ENCODE measurements at regions of chr12 and their contacts with region 1.

Region 1: DNA sequence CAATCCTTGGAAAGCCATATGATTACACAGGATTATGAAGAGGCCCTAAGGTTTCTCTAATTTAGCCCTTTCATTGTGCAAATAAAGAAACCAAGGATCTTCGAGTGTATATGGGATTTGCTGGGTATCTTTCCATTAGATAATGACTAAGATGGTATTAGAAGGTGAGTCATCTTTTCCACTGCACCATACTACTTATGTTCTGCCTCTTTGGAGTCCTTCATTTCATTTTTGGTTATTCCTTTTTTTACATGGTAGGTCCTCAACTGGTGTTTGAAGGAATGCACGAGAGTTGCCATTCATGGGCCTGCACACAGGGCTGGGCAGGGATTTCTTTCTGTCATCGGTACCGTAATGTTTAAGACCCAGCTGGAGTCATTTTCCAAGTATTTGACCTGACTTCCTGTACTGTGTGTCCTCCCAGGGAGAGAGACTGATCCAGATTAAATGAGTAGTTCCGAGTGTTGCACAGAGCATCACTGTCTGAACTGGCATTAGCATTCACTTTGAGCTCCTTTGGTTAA is 85.7 kb downstream of the BORCS5 start:
- DNase-seq: no peak
- H3K4me3 Mint-ChIP-seq: no peak overlapping the region
- H3K27ac Mint-ChIP-seq: peak overlapping the region; percentile 95
- H3K4me1 Mint-ChIP-seq: peaks cover 88% of the 10 kb centered on the region
- H3K27me3 Mint-ChIP-seq: no peaks in the 10 kb centered on the region

Region 2: GRCh38 chr12:12376646-12377448 is 65.8 kb before region 1 on chr12:
- intact Hi-C with region 1: loop called (anchors 1 kb)
- DNase-seq: no peak
- H3K4me3 Mint-ChIP-seq: no peak overlapping the region
- H3K27ac Mint-ChIP-seq: peak overlapping the region; percentile 59
- H3K4me1 Mint-ChIP-seq: peaks cover 34% of the 10 kb centered on the region
- H3K27me3 Mint-ChIP-seq: no peaks in the 10 kb centered on the region

Region 3: DNA sequence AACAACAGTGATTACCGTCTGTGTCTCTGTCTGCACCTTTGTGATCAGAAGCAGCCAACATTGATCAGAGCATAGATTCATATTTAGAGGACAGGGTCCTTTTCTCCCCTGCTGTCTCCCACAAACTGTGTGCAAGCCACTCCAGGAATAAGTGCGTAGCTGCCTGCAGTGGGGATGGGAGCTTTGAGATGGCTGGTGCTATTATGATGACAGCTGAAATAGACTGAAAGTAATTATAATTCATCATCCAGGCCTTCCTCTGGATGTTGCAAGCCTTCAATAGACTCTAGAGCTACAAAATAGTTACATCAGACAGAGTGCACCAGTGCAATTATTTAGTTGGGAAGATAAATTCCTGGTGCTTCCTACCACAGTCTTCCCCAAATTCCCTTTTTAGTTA is 17.6 kb before region 1 on chr12:
- intact Hi-C with region 1: no loop called
- DNase-seq: no peak
- H3K4me3 Mint-ChIP-seq: no peak overlapping the region
- H3K27ac Mint-ChIP-seq: no peak overlapping the region
- H3K4me1 Mint-ChIP-seq: peaks cover 37% of the 10 kb centered on the region
- H3K27me3 Mint-ChIP-seq: no peaks in the 10 kb centered on the region

Region 4: DNA sequence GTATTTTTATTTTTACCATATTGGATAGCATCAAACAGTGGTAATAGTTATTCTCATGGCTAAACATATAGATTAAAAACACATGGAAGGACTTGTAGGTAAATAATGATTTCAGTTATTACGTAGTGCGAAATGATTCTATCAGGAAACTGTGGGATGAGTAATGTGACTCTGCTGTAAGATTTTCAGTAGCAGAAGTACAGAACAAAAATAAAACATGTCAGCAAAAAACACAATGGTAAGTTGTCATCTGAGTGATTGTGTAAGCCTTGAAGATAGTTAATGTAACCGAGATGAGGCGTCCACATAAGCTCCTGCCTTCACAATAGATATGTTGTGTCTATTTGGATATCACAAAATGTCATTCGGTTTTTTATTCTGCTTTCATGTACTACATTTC is 14.0 kb after region 1 on chr12:
- intact Hi-C with region 1: loop called (anchors 1 kb)
- DNase-seq: no peak
- H3K4me3 Mint-ChIP-seq: peak overlapping the region; percentile 55
- H3K27ac Mint-ChIP-seq: peak overlapping the region; percentile 96
- H3K4me1 Mint-ChIP-seq: peaks cover 55% of the 10 kb centered on the region
- H3K27me3 Mint-ChIP-seq: no peaks in the 10 kb centered on the region

Region 5: GRCh38 chr12:12474931-12475795 is 32.6 kb after region 1 on chr12:
- intact Hi-C with region 1: loop called (anchors 1 kb)
- DNase-seq: peak; percentile 56
- H3K4me3 Mint-ChIP-seq: peak overlapping the region; percentile 74
- H3K27ac Mint-ChIP-seq: peak overlapping the region; percentile 96
- H3K4me1 Mint-ChIP-seq: peaks cover 73% of the 10 kb centered on the region
- H3K27me3 Mint-ChIP-seq: no peaks in the 10 kb centered on the region

Region 6: DNA sequence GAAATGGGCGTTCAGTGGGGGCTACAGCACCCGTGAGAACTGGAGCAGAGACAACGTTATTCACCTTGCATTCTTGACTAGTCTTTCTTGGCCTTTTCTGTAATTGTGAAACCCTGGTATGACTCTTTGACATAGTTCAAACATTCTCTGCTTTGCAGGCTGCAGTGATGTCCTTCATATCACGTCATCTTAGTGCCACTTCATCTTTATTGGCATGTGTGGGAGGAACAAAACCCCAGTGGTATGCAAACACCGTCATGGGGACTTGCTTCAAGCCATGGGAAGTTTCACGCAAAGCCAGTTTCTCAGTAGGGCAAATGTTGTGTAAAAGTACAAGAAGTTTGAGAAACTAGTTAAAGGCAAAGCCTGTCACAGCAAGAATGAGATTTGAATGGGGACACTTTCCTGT is 140.3 kb after region 1 on chr12:
- intact Hi-C with region 1: loop called (anchors 1 kb)
- DNase-seq: peak; percentile 19
- H3K4me3 Mint-ChIP-seq: no peak overlapping the region
- H3K27ac Mint-ChIP-seq: peak overlapping the region; percentile 86
- H3K4me1 Mint-ChIP-seq: peaks cover 57% of the 10 kb centered on the region
- H3K27me3 Mint-ChIP-seq: no peaks in the 10 kb centered on the region

Region 7: GRCh38 chr12:12975322-12976077 is 532.9 kb after region 1 on chr12:
- intact Hi-C with region 1: no loop called
- DNase-seq: no peak
- H3K4me3 Mint-ChIP-seq: no peak overlapping the region
- H3K27ac Mint-ChIP-seq: no peak overlapping the region
- H3K4me1 Mint-ChIP-seq: no peaks in the 10 kb centered on the region
- H3K27me3 Mint-ChIP-seq: no peaks in the 10 kb centered on the region